ENCODE measurements at regions of chr22 and their contacts with region 1.

Region 1: GRCh38 chr22:38034274-38034882 is 22.8 kb upstream of the PICK1 start:
- DNase-seq: peak; percentile 43 to 94 (median 88)
- H3K4me3 ChIP-seq: peak overlapping the region in 8 of 59 donors; percentile 2 to 20 (median 7)
- H3K27ac ChIP-seq: peak overlapping the region; percentile 93 to 100 (median 99)
- H3K27me3 ChIP-seq: no peaks in the 10 kb centered on the region
- CTCF ChIP-seq: peak in 15 of 56 donors; percentile 2 to 41 (median 14)

Region 2: DNA sequence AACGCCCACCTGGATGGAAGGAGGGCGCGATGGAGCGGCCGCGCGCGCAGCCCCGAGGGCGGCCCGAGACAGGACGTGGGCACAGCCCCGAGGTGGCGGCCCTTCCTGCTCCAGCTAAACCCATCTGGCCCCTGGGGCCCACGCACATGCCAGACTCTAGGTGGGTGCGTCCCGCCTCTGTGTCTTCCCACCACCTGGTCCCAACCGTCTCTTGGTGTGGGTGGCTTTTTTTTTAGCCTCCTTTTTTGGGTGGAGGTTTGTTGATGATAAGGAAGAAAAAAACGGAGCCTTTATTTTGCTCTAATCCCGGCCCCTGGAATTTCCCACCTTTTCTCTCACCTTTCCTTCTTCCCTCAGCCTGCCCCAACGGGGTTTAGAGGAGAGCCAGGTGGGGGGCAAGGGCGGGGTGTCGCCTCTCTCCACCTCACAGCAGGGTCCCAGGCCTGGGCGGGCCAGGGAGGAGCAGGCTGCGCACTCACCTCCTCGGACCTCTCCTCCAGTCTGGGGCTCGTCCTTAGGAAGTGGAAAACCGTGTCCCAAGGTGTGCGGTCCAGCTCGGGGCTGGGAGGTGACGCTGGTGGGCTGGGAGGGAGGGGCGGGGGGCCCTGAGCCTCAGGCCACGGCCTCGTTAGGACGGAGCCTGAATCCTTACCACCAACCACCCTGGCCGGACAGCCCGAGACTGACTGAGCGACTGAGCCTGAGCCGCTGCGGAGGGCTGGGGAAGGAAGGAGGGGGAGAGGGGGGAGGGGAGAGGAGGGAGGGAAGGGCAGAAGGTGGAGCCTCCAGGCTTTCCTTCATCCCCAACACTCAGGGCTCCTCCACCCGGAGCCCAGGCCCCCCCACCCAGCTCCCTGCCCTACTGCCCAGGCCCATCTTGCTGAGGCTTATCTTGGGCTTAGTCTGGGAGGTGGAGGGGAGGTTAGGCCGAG is 50.3 kb before region 1 on chr22 and contains the start of gene SOX10:
- intact Hi-C with region 1: loop called (anchors 2 to 5 kb)
- DNase-seq: peak in 9 of 10 donors; percentile 60 to 84 (median 75)
- H3K4me3 ChIP-seq: peak within 1 kb of the TSS; percentile 33 to 86 (median 62)
- H3K27ac ChIP-seq: peak within 1 kb of the TSS; percentile 23 to 100 (median 92)
- H3K27me3 ChIP-seq: no peaks in the 10 kb centered on the region
- CTCF ChIP-seq: no peak
- total RNA-seq, gene SOX10: 19.6 to 299 (median 76.3) TPM

Region 3: DNA sequence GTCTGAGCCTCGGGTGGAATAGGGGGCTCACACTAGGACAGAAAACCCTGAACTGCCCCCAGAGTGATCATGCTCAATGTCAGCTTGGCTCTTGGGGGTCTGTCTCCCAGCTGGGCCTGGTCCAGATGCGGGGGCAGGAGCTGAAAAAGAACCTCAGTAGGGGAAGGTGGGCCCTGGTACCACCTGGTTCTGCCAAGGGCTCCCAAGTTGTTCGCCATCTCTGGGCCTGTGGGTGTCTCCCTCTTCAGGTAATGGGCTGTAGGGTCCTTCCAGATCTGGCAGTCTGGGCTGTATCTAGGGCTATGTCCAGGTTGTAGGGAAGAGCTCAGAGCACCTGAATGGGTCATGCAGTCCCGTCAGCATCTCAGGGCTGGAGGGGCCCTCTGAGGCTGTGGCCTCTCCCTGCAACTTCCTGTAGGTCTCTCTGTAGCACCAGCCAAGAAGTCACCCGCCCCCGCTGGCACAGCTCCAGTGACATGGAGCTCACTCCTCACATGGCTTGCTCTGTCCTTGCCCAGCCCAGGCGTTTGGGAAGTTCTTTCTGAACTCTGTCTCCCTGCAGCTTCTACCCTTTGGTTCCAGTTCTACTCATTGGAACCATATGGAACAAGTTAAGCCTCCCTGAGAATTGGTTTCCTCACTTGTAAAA is 17.0 kb before region 1 on chr22:
- intact Hi-C with region 1: loop called (anchors 1 kb)
- DNase-seq: peak in 9 of 10 donors; percentile 81 to 89 (median 85)
- H3K4me3 ChIP-seq: peak overlapping the region in 31 of 59 donors; percentile 1 to 46 (median 30)
- H3K27ac ChIP-seq: peak overlapping the region; percentile 79 to 100 (median 99)
- H3K27me3 ChIP-seq: no peaks in the 10 kb centered on the region
- CTCF ChIP-seq: peak in 3 of 56 donors; percentile 10 to 13 (median 10)

Region 4: GRCh38 chr22:38097557-38098409 is 63.4 kb after region 1 on chr22:
- intact Hi-C with region 1: no loop called
- DNase-seq: peak in 1 of 10 donors; percentile 40
- H3K4me3 ChIP-seq: no peak overlapping the region
- H3K27ac ChIP-seq: no peak overlapping the region
- H3K27me3 ChIP-seq: no peaks in the 10 kb centered on the region
- CTCF ChIP-seq: peak in 21 of 56 donors; percentile 9 to 37 (median 17)

Measured in dorsolateral prefrontal cortex (tissue), 120 donors.